ENCODE measurements at regions of chr5 and their contacts with region 1.

Region 1: GRCh38 chr5:76859591-76860247 is 9.9 kb downstream of the S100Z start:
- DNase-seq: peak in 1 of 2 donors; percentile 32
- H3K4me3 ChIP-seq: no peak overlapping the region
- H3K27ac ChIP-seq: no peak overlapping the region
- H3K4me1 ChIP-seq: no peaks in the 10 kb centered on the region
- H3K27me3 ChIP-seq: no peaks in the 10 kb centered on the region
- CTCF ChIP-seq: no peak

Region 2: DNA sequence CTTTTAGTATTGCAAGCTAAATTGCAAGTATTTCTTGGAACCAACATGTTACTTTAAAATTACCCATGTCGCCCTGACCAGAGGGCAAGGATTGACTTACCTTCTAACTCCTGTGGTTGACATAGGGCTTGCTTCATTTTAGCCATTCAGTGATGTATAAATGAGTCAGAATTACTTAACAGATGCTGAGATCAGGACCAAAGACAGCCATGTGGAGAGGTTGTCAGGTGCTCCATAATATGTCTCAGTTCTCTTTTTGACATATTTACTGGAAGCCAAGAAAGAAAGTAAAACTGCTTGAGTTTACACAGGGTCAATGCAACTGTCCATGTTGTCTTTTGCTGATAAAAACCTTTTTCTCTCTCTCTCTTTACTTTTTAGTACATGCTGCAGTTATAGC is 269.7 kb before region 1 on chr5:
- intact Hi-C with region 1: loop called (anchors 5 kb)
- DNase-seq: no peak
- H3K4me3 ChIP-seq: no peak overlapping the region
- H3K27ac ChIP-seq: no peak overlapping the region
- H3K4me1 ChIP-seq: no peaks in the 10 kb centered on the region
- H3K27me3 ChIP-seq: peaks cover 0 to 3% of the 10 kb centered on the region in 2 donors
- CTCF ChIP-seq: no peak

Measured in tibial artery (tissue), 4 donors.